ENCODE measurements at regions of chr4 and their contacts with region 1.

Region 1: DNA sequence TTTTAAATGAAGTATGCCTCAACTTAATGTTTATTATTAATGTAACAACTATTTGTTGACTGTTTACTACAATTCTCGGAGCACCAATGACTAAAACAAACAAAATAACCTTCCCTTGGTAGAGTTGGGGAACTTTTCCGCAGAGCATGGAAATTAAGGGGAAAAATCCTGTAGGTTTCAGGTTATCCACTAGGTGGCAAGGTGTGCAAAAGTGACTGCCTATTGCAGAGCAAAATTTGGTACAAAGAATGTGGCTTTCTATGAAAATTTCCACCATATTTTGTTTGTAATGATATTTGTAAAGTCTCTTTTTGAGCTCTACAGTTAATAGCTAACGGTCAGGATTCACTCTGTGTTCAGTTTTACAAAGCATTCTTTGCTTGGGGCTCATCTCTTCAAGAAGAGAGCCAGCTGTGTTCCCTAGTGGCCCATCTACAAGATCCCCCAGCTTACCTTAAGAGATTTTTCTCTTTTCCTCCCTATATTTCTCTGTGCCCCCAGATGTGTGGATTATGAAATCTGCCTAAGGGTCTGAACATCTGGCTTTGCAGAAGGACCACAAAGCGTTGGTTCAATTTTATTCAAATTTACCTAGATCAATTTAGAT is 61.1 kb downstream of the FBXO8 start:
- DNase-seq: peak in 1 of 35 experiments; percentile 52
- ATAC-seq: peak in 2 of 4 experiments; percentile 50 to 51
- H3K4me3 ChIP-seq: no peak overlapping the region
- H3K4me3 Mint-ChIP-seq: no peak overlapping the region
- H3K27ac ChIP-seq: no peak overlapping the region
- H3K27ac Mint-ChIP-seq: no peak overlapping the region
- H3K4me1 ChIP-seq: peaks cover 2 to 12% of the 10 kb centered on the region in 2 experiments
- H3K4me1 Mint-ChIP-seq: peaks cover 9 to 11% (median 11%) of the 10 kb centered on the region in 3 donors
- H3K27me3 ChIP-seq: peaks cover 17 to 25% of the 10 kb centered on the region in 2 experiments
- H3K27me3 Mint-ChIP-seq: peaks cover 30 to 51% of the 10 kb centered on the region in 2 donors

Region 2: GRCh38 chr4:174318829-174319764 is 96.7 kb after region 1 on chr4:
- CTCF ChIA-PET with region 1: interaction called, 6 to 13 read pairs
- POLR2A ChIA-PET with region 1: no interaction called
- DNase-seq: peak in 1 of 35 experiments; percentile 63
- ATAC-seq: no peak
- H3K4me3 ChIP-seq: no peak overlapping the region
- H3K4me3 Mint-ChIP-seq: no peak overlapping the region
- H3K27ac ChIP-seq: no peak overlapping the region
- H3K27ac Mint-ChIP-seq: no peak overlapping the region
- H3K4me1 ChIP-seq: no peaks in the 10 kb centered on the region
- H3K4me1 Mint-ChIP-seq: no peaks in the 10 kb centered on the region
- H3K27me3 ChIP-seq: no peaks in the 10 kb centered on the region
- H3K27me3 Mint-ChIP-seq: no peaks in the 10 kb centered on the region

Region 3: DNA sequence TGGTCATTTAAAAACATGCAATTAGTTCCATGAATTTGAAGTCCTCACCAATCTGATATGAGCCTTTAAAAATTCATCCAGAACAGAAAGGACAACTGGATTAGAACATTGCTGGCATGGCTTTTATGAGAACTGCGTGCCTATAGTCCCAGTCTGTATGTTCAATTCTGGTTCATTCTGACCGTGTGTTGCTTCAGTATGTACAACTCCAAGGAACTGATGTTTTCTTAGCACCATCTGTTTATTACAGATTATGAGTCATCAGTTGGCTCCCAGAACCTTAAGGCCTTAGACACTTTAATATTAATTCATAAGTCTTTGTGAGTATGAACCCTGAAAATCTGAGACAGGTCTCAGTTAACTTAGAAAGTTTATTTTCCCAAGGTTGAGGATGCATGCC is 176.4 kb after region 1 on chr4:
- CTCF ChIA-PET with region 1: no interaction called
- POLR2A ChIA-PET with region 1: no interaction called
- DNase-seq: no peak
- ATAC-seq: no peak
- H3K4me3 ChIP-seq: no peak overlapping the region
- H3K4me3 Mint-ChIP-seq: no peak overlapping the region
- H3K27ac ChIP-seq: no peak overlapping the region
- H3K27ac Mint-ChIP-seq: no peak overlapping the region
- H3K4me1 ChIP-seq: no peaks in the 10 kb centered on the region
- H3K4me1 Mint-ChIP-seq: peaks cover 0 to 5% (median 0%) of the 10 kb centered on the region in 3 donors
- H3K27me3 ChIP-seq: no peaks in the 10 kb centered on the region
- H3K27me3 Mint-ChIP-seq: peaks cover 7 to 9% of the 10 kb centered on the region in 2 donors